HCT116 (cell line): ENCODE measurements at regions of chr7 and their contacts with region 1.

Region 1: DNA sequence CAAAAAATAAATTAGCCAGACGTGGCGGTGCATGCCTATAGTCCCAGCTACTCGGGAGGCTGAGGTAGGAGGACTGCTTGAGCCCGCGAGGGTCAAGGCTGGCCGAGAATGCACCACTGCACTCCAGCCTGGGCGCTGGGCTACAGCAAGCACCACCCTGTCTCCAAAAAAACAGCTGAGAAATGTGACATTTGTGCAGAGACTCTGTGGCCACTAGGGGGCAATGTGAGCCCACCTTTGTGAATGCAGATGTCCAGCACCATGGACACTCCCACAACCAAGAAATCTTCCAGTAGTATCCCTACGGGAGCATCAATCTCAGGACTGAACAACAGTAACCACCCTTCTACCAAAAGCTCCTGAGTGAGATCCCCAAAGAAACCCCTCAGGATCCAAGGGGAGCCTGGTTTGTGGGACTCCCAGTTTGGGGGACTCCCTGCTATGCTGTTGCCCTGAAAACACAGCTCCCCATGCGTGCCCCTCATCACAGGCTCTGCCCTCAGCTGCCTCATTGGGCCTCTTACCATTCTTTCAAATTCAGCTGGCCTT is 6.2 kb upstream of the AHCYL2 start:
- DNase-seq: peak; percentile 67
- ATAC-seq: peak; percentile 96
- H3K4me3 ChIP-seq: no peak overlapping the region
- H3K27ac ChIP-seq: no peak overlapping the region
- H3K4me1 ChIP-seq: no peaks in the 10 kb centered on the region; a peak in 1 of 4 replicates
- H3K27me3 ChIP-seq: no peaks in the 10 kb centered on the region
- CTCF ChIP-seq: peak; percentile 87 to 91 (median 89)
- POLR2A ChIP-seq: no peak
- RAD21 ChIP-seq: peak; percentile 98

Region 2: GRCh38 chr7:129298268-129298893 is 79.8 kb after region 1 on chr7:
- CTCF ChIA-PET with region 1: interaction called, 48 read pairs
- POLR2A ChIA-PET with region 1: no interaction called
- RAD21 ChIA-PET with region 1: interaction called, 4 to 7 read pairs
- intact Hi-C with region 1: loop called (anchors 1 kb)
- DNase-seq: peak; percentile 26
- ATAC-seq: peak; percentile 58; the same call in 1 of the 2 replicates
- H3K4me3 ChIP-seq: no peak overlapping the region
- H3K27ac ChIP-seq: no peak overlapping the region
- H3K4me1 ChIP-seq: peaks cover 4 to 11% of the 10 kb centered on the region in 2 experiments; a peak in 3 of 4 replicates
- H3K27me3 ChIP-seq: no peaks in the 10 kb centered on the region
- CTCF ChIP-seq: peak; percentile 75 to 89 (median 81)
- POLR2A ChIP-seq: no peak
- RAD21 ChIP-seq: peak; percentile 81

Region 3: GRCh38 chr7:129367700-129368388 is 149.3 kb after region 1 on chr7:
- CTCF ChIA-PET with region 1: interaction called, 15 read pairs
- POLR2A ChIA-PET with region 1: no interaction called
- RAD21 ChIA-PET with region 1: interaction called in 1 of 2 experiments, 3 read pairs
- intact Hi-C with region 1: no loop called
- DNase-seq: peak; percentile 49
- ATAC-seq: peak; percentile 95
- H3K4me3 ChIP-seq: no peak overlapping the region
- H3K27ac ChIP-seq: no peak overlapping the region
- H3K4me1 ChIP-seq: peaks cover 2 to 8% of the 10 kb centered on the region in 2 experiments; a peak in 2 of 4 replicates
- H3K27me3 ChIP-seq: no peaks in the 10 kb centered on the region
- CTCF ChIP-seq: peak; percentile 80 to 90 (median 86)
- POLR2A ChIP-seq: no peak
- RAD21 ChIP-seq: peak; percentile 91

Region 4: DNA sequence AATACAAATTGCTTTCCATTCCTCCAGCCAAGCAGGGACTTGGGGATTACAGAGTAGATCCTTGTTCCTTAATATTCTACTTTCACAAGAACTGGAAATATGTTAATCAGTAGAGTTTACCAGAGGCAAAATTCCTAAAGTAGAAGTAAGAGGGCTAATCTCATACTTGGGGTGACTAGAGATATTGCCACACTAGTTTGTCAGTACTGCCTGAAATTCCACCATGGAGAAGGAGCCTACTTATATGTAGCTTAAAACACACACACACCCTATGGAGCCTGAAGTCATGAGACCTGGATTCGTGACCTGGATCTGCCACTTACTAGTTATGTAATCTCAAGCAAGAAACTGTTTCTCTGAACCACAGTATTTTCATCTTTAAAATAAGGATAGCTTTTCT is 249.5 kb after region 1 on chr7:
- CTCF ChIA-PET with region 1: interaction called, 12 read pairs
- POLR2A ChIA-PET with region 1: no interaction called
- RAD21 ChIA-PET with region 1: no interaction called
- intact Hi-C with region 1: loop called (anchors 1 kb)
- DNase-seq: no peak
- ATAC-seq: no peak
- H3K4me3 ChIP-seq: no peak overlapping the region
- H3K27ac ChIP-seq: no peak overlapping the region
- H3K4me1 ChIP-seq: peaks cover 0 to 9% of the 10 kb centered on the region in 2 experiments; a peak in 3 of 4 replicates
- H3K27me3 ChIP-seq: no peaks in the 10 kb centered on the region
- CTCF ChIP-seq: no peak
- POLR2A ChIP-seq: no peak
- RAD21 ChIP-seq: no peak

Region 5: GRCh38 chr7:129644634-129645230 is 426.1 kb after region 1 on chr7:
- CTCF ChIA-PET with region 1: interaction called, 11 read pairs
- POLR2A ChIA-PET with region 1: no interaction called
- RAD21 ChIA-PET with region 1: no interaction called
- intact Hi-C with region 1: loop called (anchors 2 kb)
- DNase-seq: peak; percentile 38
- ATAC-seq: peak; percentile 60
- H3K4me3 ChIP-seq: no peak overlapping the region
- H3K27ac ChIP-seq: no peak overlapping the region
- H3K4me1 ChIP-seq: peaks cover 8 to 16% of the 10 kb centered on the region in 2 experiments; a peak in 3 of 4 replicates
- H3K27me3 ChIP-seq: no peaks in the 10 kb centered on the region
- CTCF ChIP-seq: peak; percentile 33 to 64 (median 59)
- POLR2A ChIP-seq: no peak
- RAD21 ChIP-seq: peak; percentile 76